Mucosa of descending colon (tissue), 3 donors: ENCODE measurements at regions of chr4 and their contacts with region 1.

Region 1: GRCh38 chr4:1726146-1726934 is 5.0 kb downstream of the TACC3 start:
- DNase-seq: peak; percentile 89 to 99 (median 95)
- ATAC-seq: peak; percentile 78
- H3K4me3 ChIP-seq: no peak overlapping the region
- H3K4me1 ChIP-seq: peaks cover 16% of the 10 kb centered on the region
- CTCF ChIP-seq: peak; percentile 98

Region 2: GRCh38 chr4:1693129-1693896 is 33.0 kb before region 1 on chr4:
- intact Hi-C with region 1: loop called in 1 of 2 experiments (anchors 2 kb)
- DNase-seq: peak; percentile 67 to 80 (median 79)
- ATAC-seq: peak; percentile 98
- H3K4me3 ChIP-seq: no peak overlapping the region
- H3K4me1 ChIP-seq: no peaks in the 10 kb centered on the region
- CTCF ChIP-seq: peak; percentile 94

Region 3: DNA sequence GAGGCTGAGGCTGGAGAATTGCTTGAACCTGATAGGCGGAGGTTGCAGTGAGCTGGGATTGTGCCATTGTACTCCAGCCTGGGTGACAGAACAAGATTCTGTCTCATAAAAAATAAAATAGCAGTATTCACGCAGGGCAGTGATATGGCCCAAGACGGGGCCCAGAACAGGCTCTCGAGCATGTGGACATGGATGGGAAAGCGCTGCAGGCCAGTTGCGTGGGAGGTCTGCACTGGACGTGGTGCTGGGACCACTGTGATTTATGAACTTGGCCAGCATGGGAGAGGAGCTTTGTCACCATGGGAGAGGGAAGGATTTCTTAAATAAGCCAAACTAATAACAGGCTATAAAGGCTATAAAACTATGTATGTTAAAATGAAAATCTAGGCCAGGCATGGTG is 196.5 kb after region 1 on chr4:
- intact Hi-C with region 1: no loop called
- DNase-seq: no peak
- ATAC-seq: no peak
- H3K4me3 ChIP-seq: no peak overlapping the region
- H3K4me1 ChIP-seq: no peaks in the 10 kb centered on the region
- CTCF ChIP-seq: no peak